SK-N-SH (cell line): ENCODE measurements at regions of chr1 and their contacts with region 1.

Region 1: GRCh38 chr1:9292361-9293240 is at the start of gene SPSB1:
- DNase-seq: peak; percentile 88
- H3K4me3 ChIP-seq: peak within 1 kb of the TSS; percentile 48 to 81
- H3K27ac ChIP-seq: peak within 1 kb of the TSS; percentile 9 to 49; a peak in 1 of 4 replicates
- H3K4me1 ChIP-seq: peaks cover 7 to 15% of the 10 kb centered on the region in 2 experiments; a peak in 1 of 4 replicates
- H3K27me3 ChIP-seq: no peaks in the 10 kb centered on the region
- CTCF ChIP-seq: no peak
- EP300 ChIP-seq: no peak
- RAD21 ChIP-seq: no peak
- polyA plus RNA-seq, gene SPSB1: 8.4 and 9.2 TPM in 2 replicates

Region 2: GRCh38 chr1:9317591-9318417 is 25.2 kb after region 1 on chr1:
- CTCF ChIA-PET with region 1: no interaction called
- POLR2A ChIA-PET with region 1: no interaction called
- DNase-seq: no peak
- H3K4me3 ChIP-seq: no peak overlapping the region
- H3K27ac ChIP-seq: no peak overlapping the region
- H3K4me1 ChIP-seq: peaks cover 0 to 13% of the 10 kb centered on the region in 2 experiments; a peak in 1 of 4 replicates
- H3K27me3 ChIP-seq: no peaks in the 10 kb centered on the region
- CTCF ChIP-seq: no peak
- EP300 ChIP-seq: no peak
- RAD21 ChIP-seq: no peak

Region 3: DNA sequence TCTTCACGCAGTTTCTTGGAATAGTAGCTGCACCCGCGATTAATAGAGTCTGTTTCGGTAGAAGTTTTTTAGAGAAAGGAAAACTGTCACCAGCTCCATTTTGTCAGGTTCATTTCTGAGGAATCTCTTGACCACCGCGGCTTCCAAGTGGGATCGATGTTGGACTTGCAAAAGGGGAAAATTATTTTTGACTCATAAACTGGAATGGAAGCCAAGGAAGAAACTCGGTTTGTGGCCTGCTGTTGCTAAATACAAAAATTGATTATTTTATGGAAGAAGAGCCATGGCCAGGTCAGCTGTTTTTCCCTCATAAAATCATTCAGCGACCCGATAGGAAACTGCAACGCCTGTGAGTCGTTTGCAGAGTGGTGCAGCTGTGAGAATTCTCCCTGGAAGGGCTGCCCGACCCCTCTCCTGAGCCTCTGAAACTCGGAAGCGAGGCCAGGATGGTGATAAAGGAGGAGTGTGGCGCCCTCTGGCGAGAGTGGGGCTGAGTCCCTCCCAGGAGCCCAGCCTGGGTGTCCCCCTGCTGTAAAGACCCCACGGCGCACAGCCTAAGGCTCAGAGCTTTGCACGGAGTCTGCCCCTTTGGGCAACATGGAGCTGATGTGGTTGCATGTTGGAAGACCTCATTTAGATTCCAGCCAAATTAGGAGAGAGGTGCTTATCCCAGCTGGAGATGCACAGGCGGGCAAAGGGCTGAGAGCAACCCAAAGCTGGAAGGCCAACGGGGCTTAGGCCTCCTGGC is 163.1 kb after region 1 on chr1:
- CTCF ChIA-PET with region 1: interaction called, 38 read pairs
- POLR2A ChIA-PET with region 1: no interaction called
- DNase-seq: peak; percentile 79
- H3K4me3 ChIP-seq: peak overlapping the region in 1 of 2 experiments; percentile 41; a peak in 1 of 4 replicates
- H3K27ac ChIP-seq: no peak overlapping the region
- H3K4me1 ChIP-seq: peaks cover 0 to 5% of the 10 kb centered on the region in 2 experiments; a peak in 1 of 4 replicates
- H3K27me3 ChIP-seq: no peaks in the 10 kb centered on the region
- CTCF ChIP-seq: peak; percentile 64
- EP300 ChIP-seq: no peak
- RAD21 ChIP-seq: peak; percentile 79

Region 4: DNA sequence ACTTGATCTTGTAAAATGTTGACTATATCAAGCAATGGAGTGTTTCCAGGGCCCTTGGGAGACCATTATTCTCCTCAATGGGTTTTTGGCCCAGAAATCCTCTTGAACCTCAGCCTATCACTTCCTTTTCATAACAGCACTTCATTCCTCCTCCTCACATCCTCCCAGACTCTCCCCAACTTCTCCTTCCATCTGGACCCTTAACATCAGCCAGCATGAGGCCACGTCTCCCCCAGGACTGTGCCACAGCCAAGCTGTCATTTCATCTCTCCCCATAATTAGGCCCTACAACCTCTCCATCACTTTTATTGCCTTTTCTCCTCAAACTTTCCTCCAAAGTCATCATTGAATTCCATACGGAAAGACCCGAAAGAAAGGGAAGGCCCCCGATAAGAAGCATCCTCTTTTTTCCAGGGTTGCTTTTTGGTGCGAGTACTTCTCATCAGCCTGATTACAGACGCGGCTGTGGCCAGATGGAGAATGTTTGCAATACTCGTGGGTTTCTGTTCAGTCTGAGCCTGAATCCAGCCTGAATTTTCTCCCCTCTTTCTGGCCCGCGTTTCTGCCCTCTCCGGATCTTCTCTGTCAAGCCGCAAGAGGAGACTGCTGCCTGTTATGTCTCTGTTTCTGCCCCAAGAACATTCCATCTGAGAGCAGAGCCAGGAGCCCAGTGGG is 194.0 kb after region 1 on chr1:
- CTCF ChIA-PET with region 1: interaction called, 55 read pairs
- POLR2A ChIA-PET with region 1: interaction called, 3 read pairs
- DNase-seq: no peak
- H3K4me3 ChIP-seq: no peak overlapping the region
- H3K27ac ChIP-seq: no peak overlapping the region
- H3K4me1 ChIP-seq: no peaks in the 10 kb centered on the region
- H3K27me3 ChIP-seq: no peaks in the 10 kb centered on the region
- CTCF ChIP-seq: no peak
- EP300 ChIP-seq: no peak
- RAD21 ChIP-seq: no peak